ENCODE measurements at regions of chr10 and their contacts with region 1.

Region 1: GRCh38 chr10:133261726-133262325 is 14.8 kb downstream of the ADAM8 start:
- DNase-seq: peak; percentile 75 to 91 (median 85)
- ATAC-seq: peak; percentile 27
- H3K4me3 ChIP-seq: peak overlapping the region; percentile 55
- H3K4me3 Mint-ChIP-seq: peak overlapping the region; percentile 82
- H3K27ac ChIP-seq: peak overlapping the region; percentile 63 to 71
- H3K27ac Mint-ChIP-seq: peak overlapping the region; percentile 99
- H3K4me1 ChIP-seq: peaks cover 93% of the 10 kb centered on the region
- H3K4me1 Mint-ChIP-seq: peaks cover 80% of the 10 kb centered on the region
- H3K27me3 ChIP-seq: no peaks in the 10 kb centered on the region
- H3K27me3 Mint-ChIP-seq: peaks cover 5% of the 10 kb centered on the region
- CTCF ChIP-seq: no peak

Region 2: DNA sequence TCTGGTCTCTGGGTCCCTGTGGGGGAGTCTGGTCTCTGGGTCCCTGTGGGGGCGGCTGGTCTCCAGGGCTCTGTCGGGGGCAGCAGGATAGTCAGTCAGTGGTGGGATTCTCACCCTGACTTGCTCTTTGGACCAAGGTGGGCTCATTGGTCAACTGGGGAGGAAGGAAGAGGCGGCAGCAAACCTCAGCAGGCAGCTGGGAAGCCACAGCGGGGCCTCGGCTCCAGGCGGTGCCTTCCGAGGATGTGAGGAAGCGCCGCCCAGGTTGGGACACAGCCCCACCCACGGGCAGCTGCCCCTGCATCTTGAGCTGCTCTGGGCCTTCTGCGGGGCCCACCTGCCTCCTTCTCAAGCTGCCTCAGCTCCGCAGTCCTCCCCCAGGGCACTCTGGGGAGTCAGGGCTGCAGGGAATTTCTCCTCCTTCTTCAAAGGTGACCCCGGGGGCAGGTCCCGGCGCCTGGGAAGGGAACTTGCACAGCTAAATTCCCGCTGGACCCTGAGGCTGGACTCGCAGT is 122.2 kb before region 1 on chr10:
- CTCF ChIA-PET with region 1: no interaction called
- POLR2A ChIA-PET with region 1: no interaction called
- intact Hi-C with region 1: loop called in 1 of 2 experiments (anchors 5 kb)
- DNase-seq: peak in 3 of 14 experiments; percentile 3 to 25 (median 8)
- ATAC-seq: no peak
- H3K4me3 ChIP-seq: no peak overlapping the region
- H3K4me3 Mint-ChIP-seq: no peak overlapping the region
- H3K27ac ChIP-seq: no peak overlapping the region
- H3K27ac Mint-ChIP-seq: no peak overlapping the region
- H3K4me1 ChIP-seq: peaks cover 5% of the 10 kb centered on the region
- H3K4me1 Mint-ChIP-seq: peaks cover 6% of the 10 kb centered on the region
- H3K27me3 ChIP-seq: peaks cover 3 to 9% of the 10 kb centered on the region in 2 experiments
- H3K27me3 Mint-ChIP-seq: peaks cover 17% of the 10 kb centered on the region
- CTCF ChIP-seq: no peak

Region 3: DNA sequence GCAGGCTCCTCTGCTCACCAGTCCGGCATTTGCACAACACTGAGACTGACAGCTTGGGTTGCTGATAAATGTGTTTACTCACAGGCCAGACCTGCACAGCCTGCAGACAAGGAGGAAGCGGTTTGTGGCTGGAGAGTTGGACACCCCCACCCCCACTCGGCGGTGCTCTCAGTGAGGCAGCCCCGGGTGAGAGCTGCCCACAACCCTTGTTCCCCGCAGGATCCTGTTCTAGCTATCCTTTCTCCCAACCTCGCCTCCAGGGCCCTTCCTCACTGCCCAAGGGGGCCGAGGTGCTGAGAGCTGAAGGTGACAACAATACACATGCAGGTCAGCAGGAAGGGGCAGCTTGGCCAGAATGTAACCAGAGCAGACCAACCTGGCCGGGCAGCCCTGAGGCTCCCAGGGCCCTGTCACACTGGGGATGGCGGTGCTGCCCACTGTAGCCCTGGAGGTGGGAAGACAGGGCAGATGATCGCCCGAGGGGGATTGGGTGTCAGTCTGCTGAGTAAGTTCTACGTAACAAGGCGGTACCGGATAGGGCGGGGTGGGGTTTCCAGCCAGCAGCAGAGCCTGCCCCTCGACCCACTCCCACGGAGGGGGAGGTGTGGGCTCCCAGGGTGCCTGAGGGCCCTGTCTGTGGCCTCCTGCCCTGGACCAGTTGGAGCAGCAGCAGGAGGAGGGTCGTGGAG is 16.9 kb after region 1 on chr10:
- CTCF ChIA-PET with region 1: interaction called, 16 read pairs
- POLR2A ChIA-PET with region 1: interaction called, 22 read pairs
- intact Hi-C with region 1: loop called (anchors 1 kb)
- DNase-seq: peak in 13 of 14 experiments; percentile 42 to 91 (median 54)
- ATAC-seq: peak; percentile 33
- H3K4me3 ChIP-seq: peak overlapping the region; percentile 37
- H3K4me3 Mint-ChIP-seq: peak overlapping the region; percentile 91
- H3K27ac ChIP-seq: peak overlapping the region; percentile 86
- H3K27ac Mint-ChIP-seq: peak overlapping the region; percentile 97
- H3K4me1 ChIP-seq: peaks cover 65% of the 10 kb centered on the region
- H3K4me1 Mint-ChIP-seq: peaks cover 40% of the 10 kb centered on the region
- H3K27me3 ChIP-seq: no peaks in the 10 kb centered on the region
- H3K27me3 Mint-ChIP-seq: no peaks in the 10 kb centered on the region
- CTCF ChIP-seq: no peak

Region 4: GRCh38 chr10:133373104-133373624 is 111.3 kb after region 1 on chr10 and contains the start of gene ECHS1:
- CTCF ChIA-PET with region 1: no interaction called
- POLR2A ChIA-PET with region 1: no interaction called
- intact Hi-C with region 1: loop called in 1 of 2 experiments (anchors 5 kb)
- DNase-seq: peak; percentile 79 to 95 (median 92)
- ATAC-seq: peak; percentile 99
- H3K4me3 ChIP-seq: peak within 1 kb of the TSS; percentile 60
- H3K4me3 Mint-ChIP-seq: peak within 1 kb of the TSS; percentile 87
- H3K27ac ChIP-seq: no peak within 1 kb of the TSS
- H3K27ac Mint-ChIP-seq: peak within 1 kb of the TSS; percentile 55
- H3K4me1 ChIP-seq: peaks cover 25% of the 10 kb centered on the region
- H3K4me1 Mint-ChIP-seq: peaks cover 4% of the 10 kb centered on the region
- H3K27me3 ChIP-seq: no peaks in the 10 kb centered on the region
- H3K27me3 Mint-ChIP-seq: no peaks in the 10 kb centered on the region
- CTCF ChIP-seq: no peak
- total RNA-seq, gene ECHS1: 7.6 to 8.3 TPM

Measured in CD4-positive, alpha-beta T cell (primary cell).